SK-N-SH (cell line): ENCODE measurements at regions of chr20 and their contacts with region 1.

Region 1: GRCh38 chr20:36655004-36655403 is 9.0 kb upstream of the SLA2 start:
- DNase-seq: no peak
- H3K4me3 ChIP-seq: no peak overlapping the region
- H3K27ac ChIP-seq: no peak overlapping the region
- H3K4me1 ChIP-seq: no peaks in the 10 kb centered on the region
- H3K27me3 ChIP-seq: no peaks in the 10 kb centered on the region
- CTCF ChIP-seq: no peak
- EP300 ChIP-seq: no peak
- RAD21 ChIP-seq: no peak

Region 2: GRCh38 chr20:36666181-36666740 is 11.3 kb after region 1 on chr20:
- CTCF ChIA-PET with region 1: interaction called, 10 read pairs
- POLR2A ChIA-PET with region 1: interaction called, 3 read pairs
- DNase-seq: no peak
- H3K4me3 ChIP-seq: no peak overlapping the region
- H3K27ac ChIP-seq: no peak overlapping the region
- H3K4me1 ChIP-seq: no peaks in the 10 kb centered on the region
- H3K27me3 ChIP-seq: no peaks in the 10 kb centered on the region
- CTCF ChIP-seq: peak; percentile 17
- EP300 ChIP-seq: no peak
- RAD21 ChIP-seq: peak; percentile 52